ENCODE measurements at regions of chr17 and their contacts with region 1.

Region 1: GRCh38 chr17:31487648-31488263 is 96.3 kb downstream of the RAB11FIP4 start:
- DNase-seq: peak; percentile 89
- ATAC-seq: peak; percentile 85
- H3K4me3 Mint-ChIP-seq: peak overlapping the region; percentile 89
- H3K27ac Mint-ChIP-seq: peak overlapping the region; percentile 87
- H3K4me1 Mint-ChIP-seq: peaks cover 53% of the 10 kb centered on the region
- H3K27me3 Mint-ChIP-seq: no peaks in the 10 kb centered on the region
- CTCF ChIP-seq: no peak

Region 2: GRCh38 chr17:31294820-31295488 is 192.8 kb before region 1 on chr17:
- CTCF ChIA-PET with region 1: no interaction called
- POLR2A ChIA-PET with region 1: no interaction called
- intact Hi-C with region 1: no loop called
- DNase-seq: no peak
- ATAC-seq: no peak
- H3K4me3 Mint-ChIP-seq: no peak overlapping the region
- H3K27ac Mint-ChIP-seq: no peak overlapping the region
- H3K4me1 Mint-ChIP-seq: peaks cover 2% of the 10 kb centered on the region
- H3K27me3 Mint-ChIP-seq: no peaks in the 10 kb centered on the region
- CTCF ChIP-seq: no peak

Region 3: DNA sequence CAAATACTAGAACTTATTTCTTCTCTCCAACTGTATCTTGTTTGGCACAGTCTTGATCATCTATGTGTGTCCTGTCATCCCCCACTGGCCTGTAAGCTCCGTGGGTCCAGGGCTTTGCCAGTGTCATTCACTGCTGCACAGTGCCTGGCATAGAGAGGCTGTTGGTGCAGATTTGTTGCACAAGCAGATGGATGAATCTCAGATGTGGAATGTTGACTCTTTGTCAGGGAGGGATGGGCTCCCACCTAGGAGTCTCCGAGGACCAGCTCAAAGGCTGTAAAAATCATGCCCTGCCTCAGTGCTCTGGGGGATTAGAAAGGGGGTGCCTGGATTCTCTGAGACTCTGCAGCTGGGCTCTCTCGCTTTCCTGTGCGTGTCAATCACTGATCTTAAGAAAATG is 35.7 kb before region 1 on chr17:
- CTCF ChIA-PET with region 1: no interaction called
- POLR2A ChIA-PET with region 1: interaction called, 3 read pairs
- intact Hi-C with region 1: loop called (anchors 5 kb)
- DNase-seq: no peak
- ATAC-seq: no peak
- H3K4me3 Mint-ChIP-seq: no peak overlapping the region
- H3K27ac Mint-ChIP-seq: no peak overlapping the region
- H3K4me1 Mint-ChIP-seq: peaks cover 17% of the 10 kb centered on the region
- H3K27me3 Mint-ChIP-seq: no peaks in the 10 kb centered on the region
- CTCF ChIP-seq: no peak

Region 4: DNA sequence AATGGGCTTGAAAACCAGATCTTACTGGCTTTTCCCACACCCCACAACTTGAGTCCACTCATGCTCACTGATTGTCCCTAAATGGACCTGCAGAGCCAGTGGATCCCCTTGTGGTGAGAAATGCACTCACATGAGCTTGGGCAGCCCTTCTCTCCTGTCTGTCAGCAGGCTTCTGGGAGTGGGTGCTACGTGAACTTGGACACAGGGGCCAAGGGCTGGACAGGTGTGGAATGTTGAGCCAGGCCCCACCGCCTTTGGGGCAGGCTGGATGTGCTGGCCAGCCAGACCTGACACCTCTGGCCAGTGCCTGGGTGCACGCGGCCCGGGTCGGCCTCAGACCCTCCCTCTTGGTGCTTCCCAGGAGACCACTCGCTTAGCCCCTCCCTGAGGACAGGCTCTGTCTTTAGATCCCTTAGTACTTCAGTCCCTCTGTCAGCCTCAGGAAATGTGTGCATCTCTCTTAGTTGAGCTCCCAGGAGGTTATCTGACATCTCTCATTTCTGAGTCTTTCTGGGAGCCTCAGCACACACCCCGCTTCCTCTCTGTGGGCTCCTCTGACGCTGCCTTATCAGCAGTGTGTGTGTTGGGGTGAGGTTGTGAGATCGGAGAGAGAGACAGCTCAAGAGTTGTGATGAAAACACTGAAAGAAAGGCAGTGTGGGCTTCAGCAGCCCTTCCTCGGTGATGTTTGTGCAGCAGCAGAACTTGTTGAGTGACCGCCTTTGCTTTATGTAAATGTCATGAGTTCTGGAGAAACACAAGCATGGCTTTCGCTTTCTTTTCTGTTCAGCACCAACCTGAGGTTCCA is 20.7 kb after region 1 on chr17:
- CTCF ChIA-PET with region 1: interaction called, 31 read pairs
- POLR2A ChIA-PET with region 1: interaction called, 207 read pairs
- intact Hi-C with region 1: loop called (anchors 1 kb)
- DNase-seq: no peak
- ATAC-seq: peak; percentile 77
- H3K4me3 Mint-ChIP-seq: peak overlapping the region; percentile 88
- H3K27ac Mint-ChIP-seq: peak overlapping the region; percentile 96
- H3K4me1 Mint-ChIP-seq: peaks cover 65% of the 10 kb centered on the region
- H3K27me3 Mint-ChIP-seq: no peaks in the 10 kb centered on the region
- CTCF ChIP-seq: no peak

Region 5: GRCh38 chr17:31524926-31525800 is 37.4 kb after region 1 on chr17:
- CTCF ChIA-PET with region 1: interaction called, 10 read pairs
- POLR2A ChIA-PET with region 1: no interaction called
- intact Hi-C with region 1: loop called (anchors 2 kb)
- DNase-seq: peak; percentile 89
- ATAC-seq: peak; percentile 78
- H3K4me3 Mint-ChIP-seq: no peak overlapping the region
- H3K27ac Mint-ChIP-seq: peak overlapping the region; percentile 24
- H3K4me1 Mint-ChIP-seq: peaks cover 9% of the 10 kb centered on the region
- H3K27me3 Mint-ChIP-seq: no peaks in the 10 kb centered on the region
- CTCF ChIP-seq: peak; percentile 88